ENCODE measurements at regions of chr22 and their contacts with region 1.

Region 1: DNA sequence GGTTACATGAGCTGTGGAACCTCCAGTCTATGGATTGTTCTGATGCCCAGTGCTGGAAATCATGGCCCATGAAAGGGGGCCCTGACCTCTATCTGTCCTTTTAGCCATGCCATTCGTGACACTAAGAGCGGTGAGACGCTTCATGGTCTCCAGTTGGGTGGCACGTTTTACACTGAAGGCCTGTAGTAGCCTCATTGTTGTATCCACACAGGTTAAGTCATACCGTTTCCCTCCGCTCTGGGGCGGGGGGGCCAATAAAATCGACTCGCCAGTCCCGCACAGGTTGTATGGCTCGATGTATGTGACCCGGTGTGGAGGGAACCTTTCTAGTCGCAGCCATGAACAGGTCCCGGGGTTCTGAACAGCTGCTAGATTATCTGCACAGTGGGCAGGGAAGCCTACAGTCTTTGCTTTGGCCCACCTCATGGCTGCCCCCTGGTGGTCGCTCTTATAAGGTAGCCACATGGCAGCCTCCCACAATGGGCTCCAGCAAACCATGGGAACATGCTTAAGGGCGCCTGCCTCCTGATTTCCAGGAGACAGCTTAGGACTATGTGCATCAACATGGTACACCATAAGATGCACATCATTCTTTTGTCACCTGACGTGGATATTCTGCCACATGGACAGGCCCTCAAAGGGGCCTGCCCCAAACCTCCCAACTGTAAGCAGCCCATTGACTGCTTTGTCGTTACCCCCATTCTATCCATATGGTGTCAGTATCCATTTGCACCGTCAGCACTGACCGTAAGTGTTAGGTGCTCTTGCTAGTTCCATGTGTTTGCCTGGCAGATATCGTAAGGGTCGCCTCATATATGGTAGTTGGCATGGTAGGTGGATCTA is 19.7 kb upstream of the APOL3 start:
- DNase-seq: peak; percentile 91
- ATAC-seq: peak; percentile 96
- H3K4me3 Mint-ChIP-seq: no peak overlapping the region
- H3K27ac Mint-ChIP-seq: no peak overlapping the region
- H3K4me1 Mint-ChIP-seq: peaks cover 13% of the 10 kb centered on the region
- H3K27me3 Mint-ChIP-seq: no peaks in the 10 kb centered on the region
- CTCF ChIP-seq: peak; percentile 94

Region 2: GRCh38 chr22:35995772-35996171 is 184.5 kb before region 1 on chr22:
- CTCF ChIA-PET with region 1: no interaction called
- POLR2A ChIA-PET with region 1: no interaction called
- DNase-seq: no peak
- ATAC-seq: no peak
- H3K4me3 Mint-ChIP-seq: no peak overlapping the region
- H3K27ac Mint-ChIP-seq: peak overlapping the region; percentile 74
- H3K4me1 Mint-ChIP-seq: peaks cover 39% of the 10 kb centered on the region
- H3K27me3 Mint-ChIP-seq: no peaks in the 10 kb centered on the region
- CTCF ChIP-seq: no peak

Region 3: GRCh38 chr22:36117053-36117554 is 63.2 kb before region 1 on chr22:
- CTCF ChIA-PET with region 1: no interaction called
- POLR2A ChIA-PET with region 1: no interaction called
- DNase-seq: no peak
- ATAC-seq: no peak
- H3K4me3 Mint-ChIP-seq: no peak overlapping the region
- H3K27ac Mint-ChIP-seq: no peak overlapping the region
- H3K4me1 Mint-ChIP-seq: peaks cover 10% of the 10 kb centered on the region; the same call in 1 of the 2 replicates
- H3K27me3 Mint-ChIP-seq: no peaks in the 10 kb centered on the region
- CTCF ChIP-seq: no peak

Region 4: GRCh38 chr22:36144886-36145541 is 35.2 kb before region 1 on chr22:
- CTCF ChIA-PET with region 1: interaction called, 34 read pairs
- POLR2A ChIA-PET with region 1: no interaction called
- DNase-seq: peak; percentile 43
- ATAC-seq: peak; percentile 82
- H3K4me3 Mint-ChIP-seq: peak overlapping the region; percentile 38
- H3K27ac Mint-ChIP-seq: peak overlapping the region; percentile 64
- H3K4me1 Mint-ChIP-seq: peaks cover 23% of the 10 kb centered on the region
- H3K27me3 Mint-ChIP-seq: no peaks in the 10 kb centered on the region; the same call in 1 of the 2 replicates
- CTCF ChIP-seq: no peak; the same call in 1 of the 2 replicates

Region 5: DNA sequence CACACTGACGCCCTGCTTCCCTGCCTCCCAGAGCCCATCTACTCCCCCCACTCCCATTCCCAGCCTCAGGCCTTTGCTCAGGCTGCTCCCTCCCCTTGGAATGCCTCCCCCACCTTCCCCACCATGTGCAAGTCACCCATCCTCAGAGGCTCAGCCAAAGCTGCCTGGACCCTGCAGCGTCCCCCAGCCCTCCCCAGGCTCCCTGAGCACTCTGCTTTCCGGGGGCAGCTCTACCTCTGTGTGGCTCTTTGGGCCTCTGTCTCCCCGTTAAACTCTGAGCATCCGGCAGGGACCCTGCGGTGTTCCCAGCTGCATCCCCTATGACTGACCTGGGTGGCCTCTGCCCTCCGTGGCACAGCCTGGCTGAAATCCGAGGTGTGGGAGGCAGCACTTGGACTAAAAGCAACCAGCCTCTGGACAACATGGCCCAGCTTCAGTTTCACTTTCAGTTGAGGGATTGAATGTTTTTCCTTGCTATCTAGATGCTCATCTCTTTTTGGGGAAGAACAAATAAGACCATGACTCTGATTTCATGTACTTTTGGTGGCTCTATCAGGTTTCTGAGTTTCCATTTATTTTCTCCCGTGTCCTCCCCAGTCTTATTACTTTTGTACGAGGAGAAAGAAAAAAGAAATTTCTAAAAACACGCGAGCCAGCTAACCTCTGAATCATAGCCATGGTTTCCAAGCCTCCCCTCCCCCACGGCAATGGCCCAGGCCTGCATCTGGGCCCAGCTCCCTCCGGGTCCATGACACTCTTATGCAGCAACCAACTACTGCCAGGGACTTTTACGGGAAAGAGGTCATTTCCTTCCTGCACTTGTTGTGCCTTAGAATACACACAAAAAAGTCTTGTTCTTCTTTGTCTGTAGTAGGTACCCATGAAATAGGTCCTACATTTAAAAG is 23.5 kb before region 1 on chr22:
- CTCF ChIA-PET with region 1: interaction called, 15 read pairs
- POLR2A ChIA-PET with region 1: no interaction called
- DNase-seq: peak; percentile 43
- ATAC-seq: peak; percentile 79
- H3K4me3 Mint-ChIP-seq: no peak overlapping the region; the same call in 1 of the 2 replicates
- H3K27ac Mint-ChIP-seq: peak overlapping the region; percentile 42
- H3K4me1 Mint-ChIP-seq: peaks cover 29% of the 10 kb centered on the region
- H3K27me3 Mint-ChIP-seq: no peaks in the 10 kb centered on the region
- CTCF ChIP-seq: no peak